ENCODE measurements at regions of chr7 and their contacts with region 1.

Region 1: GRCh38 chr7:121329191-121330052 is 622 bp downstream of the WNT16 start:
- DNase-seq: no peak
- ATAC-seq: peak in 2 of 4 donors; percentile 18 to 48
- H3K4me3 ChIP-seq: peak overlapping the region; percentile 65
- H3K27ac ChIP-seq: no peak overlapping the region
- H3K4me1 ChIP-seq: peaks cover 9% of the 10 kb centered on the region
- H3K27me3 ChIP-seq: peaks cover 0 to 71% (median 22%) of the 10 kb centered on the region in 3 donors
- CTCF ChIP-seq: no peak

Region 2: DNA sequence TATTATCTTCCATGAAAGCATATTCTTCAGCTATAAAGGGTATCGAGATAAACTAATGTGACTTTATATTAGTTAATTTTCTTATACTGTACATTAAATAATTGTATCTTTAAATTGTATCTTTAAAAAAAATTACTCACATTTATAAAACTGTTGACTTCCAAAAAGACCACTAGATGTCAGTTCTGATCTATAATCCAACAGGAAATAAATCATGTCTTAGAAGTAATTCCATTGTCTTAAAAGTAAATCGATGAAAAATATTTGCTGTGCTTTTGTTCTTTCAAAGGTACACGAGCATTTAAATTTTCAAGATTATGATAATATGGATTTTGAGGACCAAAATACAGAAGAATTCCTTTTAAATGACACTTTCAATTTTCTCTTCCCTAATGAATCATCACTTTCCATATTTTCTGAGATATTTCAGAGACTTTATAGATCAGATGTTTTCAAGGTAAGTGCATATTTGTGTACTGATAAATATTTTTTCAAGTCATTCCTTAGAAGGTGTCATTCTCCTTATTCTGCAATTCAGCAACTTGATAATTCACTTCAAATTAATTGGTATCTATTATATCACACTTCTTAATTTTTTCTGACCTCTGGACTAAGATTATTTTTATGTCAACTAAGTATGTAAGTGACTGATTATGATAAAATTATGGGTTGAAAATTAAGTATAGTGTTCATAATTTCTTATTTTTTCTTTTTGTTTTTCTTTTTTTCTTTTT is 202.5 kb before region 1 on chr7:
- intact Hi-C with region 1: loop called in 1 of 2 experiments (anchors 10 kb)
- DNase-seq: no peak
- ATAC-seq: no peak
- H3K4me3 ChIP-seq: no peak overlapping the region
- H3K27ac ChIP-seq: no peak overlapping the region
- H3K4me1 ChIP-seq: no peaks in the 10 kb centered on the region
- H3K27me3 ChIP-seq: no peaks in the 10 kb centered on the region
- CTCF ChIP-seq: no peak

Measured in psoas muscle (tissue), 8 donors.